CD8-positive, alpha-beta memory T cell (primary cell): ENCODE measurements at regions of chr17 and their contacts with region 1.

Region 1: GRCh38 chr17:73371285-73371684 is 59.5 kb upstream of the CDC42EP4 start:
- DNase-seq: no peak
- H3K4me3 ChIP-seq: no peak overlapping the region
- H3K4me3 Mint-ChIP-seq: no peak overlapping the region
- H3K27ac ChIP-seq: no peak overlapping the region
- H3K27ac Mint-ChIP-seq: no peak overlapping the region
- H3K4me1 ChIP-seq: no peaks in the 10 kb centered on the region
- H3K4me1 Mint-ChIP-seq: no peaks in the 10 kb centered on the region
- H3K27me3 ChIP-seq: no peaks in the 10 kb centered on the region
- H3K27me3 Mint-ChIP-seq: peaks cover 7 to 9% of the 10 kb centered on the region in 2 donors

Region 2: DNA sequence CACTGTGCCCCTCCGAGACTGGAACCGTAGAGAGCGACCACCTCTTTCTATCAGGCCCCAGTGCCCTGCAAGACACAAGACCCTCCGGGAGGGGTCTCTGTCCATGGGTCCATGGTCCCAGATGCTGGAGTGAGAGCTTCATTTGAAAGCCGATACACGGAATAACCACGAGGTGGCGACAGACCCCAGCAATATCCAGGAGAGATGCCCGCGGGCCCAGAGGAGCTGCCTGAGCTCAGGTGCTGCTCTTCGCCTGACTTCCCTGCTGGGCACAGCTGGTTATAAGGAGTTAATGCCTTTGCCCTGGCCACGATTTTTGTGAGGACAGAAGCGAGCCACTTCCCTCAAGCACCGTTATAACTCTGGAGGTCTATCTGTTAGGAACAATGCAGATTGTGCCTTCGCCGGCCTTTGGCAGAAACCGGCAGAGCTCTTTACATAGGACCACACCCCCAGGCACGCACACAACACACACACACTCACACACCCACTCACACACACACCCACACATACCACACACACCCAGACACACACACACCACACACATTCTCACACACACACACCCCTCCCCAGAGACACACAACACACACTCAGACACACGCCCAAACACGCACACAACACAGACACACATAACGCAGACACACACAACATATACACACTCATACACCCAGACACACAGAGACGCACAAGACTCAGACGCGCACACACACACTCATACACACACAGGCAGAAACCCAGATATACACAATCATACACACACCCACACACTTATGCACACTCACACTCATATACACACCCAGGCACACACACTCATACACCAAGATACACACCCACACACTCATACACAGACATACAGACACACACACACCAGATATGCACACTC is 814.1 kb before region 1 on chr17:
- CTCF ChIA-PET with region 1: interaction called, 11 read pairs
- POLR2A ChIA-PET with region 1: no interaction called
- DNase-seq: peak in 3 of 5 donors; percentile 23 to 59 (median 33)
- H3K4me3 ChIP-seq: no peak overlapping the region
- H3K4me3 Mint-ChIP-seq: no peak overlapping the region
- H3K27ac ChIP-seq: no peak overlapping the region
- H3K27ac Mint-ChIP-seq: no peak overlapping the region
- H3K4me1 ChIP-seq: no peaks in the 10 kb centered on the region
- H3K4me1 Mint-ChIP-seq: no peaks in the 10 kb centered on the region
- H3K27me3 ChIP-seq: no peaks in the 10 kb centered on the region
- H3K27me3 Mint-ChIP-seq: peaks cover 0 to 5% of the 10 kb centered on the region in 2 donors

Region 3: GRCh38 chr17:73192894-73193701 is 178.2 kb before region 1 on chr17 and contains the start of gene COG1:
- CTCF ChIA-PET with region 1: interaction called, 26 read pairs
- POLR2A ChIA-PET with region 1: interaction called, 7 read pairs
- DNase-seq: peak; percentile 73 to 92 (median 78)
- H3K4me3 ChIP-seq: peak within 1 kb of the TSS; percentile 87
- H3K4me3 Mint-ChIP-seq: peak within 1 kb of the TSS; percentile 91 to 99 (median 98)
- H3K27ac ChIP-seq: peak within 1 kb of the TSS; percentile 95
- H3K27ac Mint-ChIP-seq: peak within 1 kb of the TSS; percentile 92 to 98 (median 97)
- H3K4me1 ChIP-seq: peaks cover 16% of the 10 kb centered on the region
- H3K4me1 Mint-ChIP-seq: peaks cover 26 to 46% (median 34%) of the 10 kb centered on the region in 3 donors
- H3K27me3 ChIP-seq: no peaks in the 10 kb centered on the region
- H3K27me3 Mint-ChIP-seq: no peaks in the 10 kb centered on the region
- total RNA-seq, gene COG1: 24.6 to 26.5 TPM

Region 4: GRCh38 chr17:73255671-73256181 is 115.6 kb before region 1 on chr17:
- CTCF ChIA-PET with region 1: interaction called, 102 read pairs
- POLR2A ChIA-PET with region 1: no interaction called
- DNase-seq: peak; percentile 20 to 63 (median 38)
- H3K4me3 ChIP-seq: no peak overlapping the region
- H3K4me3 Mint-ChIP-seq: no peak overlapping the region
- H3K27ac ChIP-seq: no peak overlapping the region
- H3K27ac Mint-ChIP-seq: no peak overlapping the region
- H3K4me1 ChIP-seq: no peaks in the 10 kb centered on the region
- H3K4me1 Mint-ChIP-seq: peaks cover 4 to 7% (median 4%) of the 10 kb centered on the region in 3 donors
- H3K27me3 ChIP-seq: no peaks in the 10 kb centered on the region
- H3K27me3 Mint-ChIP-seq: peaks cover 0 to 4% of the 10 kb centered on the region in 2 donors

Region 5: DNA sequence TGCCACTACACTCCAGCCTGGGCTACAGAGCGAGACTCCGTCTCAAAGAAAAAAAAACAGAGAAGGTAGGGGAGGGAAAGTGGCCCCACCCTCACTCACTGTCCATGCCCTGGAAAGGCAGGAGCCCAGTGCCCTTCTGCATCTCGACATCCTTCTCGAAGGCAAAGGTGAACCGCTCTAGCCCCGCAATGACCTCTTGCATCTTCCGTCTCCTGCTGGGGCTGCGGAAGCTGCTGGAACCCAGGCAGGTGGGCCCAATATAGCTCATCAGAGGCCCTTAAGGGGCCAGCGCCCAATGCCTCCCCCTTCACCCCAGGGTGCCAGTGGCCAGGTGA is 109.7 kb before region 1 on chr17 and contains the start of gene CPSF4L:
- CTCF ChIA-PET with region 1: interaction called, 102 read pairs
- POLR2A ChIA-PET with region 1: no interaction called
- DNase-seq: no peak
- H3K4me3 ChIP-seq: no peak within 1 kb of the TSS
- H3K4me3 Mint-ChIP-seq: no peak within 1 kb of the TSS
- H3K27ac ChIP-seq: no peak within 1 kb of the TSS
- H3K27ac Mint-ChIP-seq: no peak within 1 kb of the TSS
- H3K4me1 ChIP-seq: no peaks in the 10 kb centered on the region
- H3K4me1 Mint-ChIP-seq: no peaks in the 10 kb centered on the region
- H3K27me3 ChIP-seq: no peaks in the 10 kb centered on the region
- H3K27me3 Mint-ChIP-seq: peaks cover 0 to 4% of the 10 kb centered on the region in 2 donors
- total RNA-seq, gene CPSF4L: not detected

Region 6: GRCh38 chr17:73929860-73930430 is 558.7 kb after region 1 on chr17:
- CTCF ChIA-PET with region 1: no interaction called
- POLR2A ChIA-PET with region 1: no interaction called
- DNase-seq: no peak
- H3K4me3 ChIP-seq: no peak overlapping the region
- H3K4me3 Mint-ChIP-seq: no peak overlapping the region
- H3K27ac ChIP-seq: no peak overlapping the region
- H3K27ac Mint-ChIP-seq: peak overlapping the region in 1 of 8 donors; percentile 24
- H3K4me1 ChIP-seq: no peaks in the 10 kb centered on the region
- H3K4me1 Mint-ChIP-seq: peaks cover 1 to 4% (median 2%) of the 10 kb centered on the region in 3 donors
- H3K27me3 ChIP-seq: no peaks in the 10 kb centered on the region
- H3K27me3 Mint-ChIP-seq: peaks cover 9 to 47% of the 10 kb centered on the region in 2 donors